ENCODE measurements at regions of chr11 and their contacts with region 1.

Region 1: GRCh38 chr11:73521621-73522020 is 76.3 kb downstream of the FAM168A start:
- DNase-seq: peak; percentile 53
- ATAC-seq: peak; percentile 84
- H3K4me3 ChIP-seq: no peak overlapping the region
- H3K27ac ChIP-seq: peak overlapping the region; percentile 64
- H3K4me1 ChIP-seq: peaks cover 17% of the 10 kb centered on the region
- H3K27me3 ChIP-seq: no peaks in the 10 kb centered on the region
- CTCF ChIP-seq: no peak
- EP300 ChIP-seq: 0 out of 4 replicates have a peak, but pooled peaks of 1 of the 2 experiments have one; percentile 20
- POLR2A ChIP-seq: no peak
- RAD21 ChIP-seq: no peak

Region 2: DNA sequence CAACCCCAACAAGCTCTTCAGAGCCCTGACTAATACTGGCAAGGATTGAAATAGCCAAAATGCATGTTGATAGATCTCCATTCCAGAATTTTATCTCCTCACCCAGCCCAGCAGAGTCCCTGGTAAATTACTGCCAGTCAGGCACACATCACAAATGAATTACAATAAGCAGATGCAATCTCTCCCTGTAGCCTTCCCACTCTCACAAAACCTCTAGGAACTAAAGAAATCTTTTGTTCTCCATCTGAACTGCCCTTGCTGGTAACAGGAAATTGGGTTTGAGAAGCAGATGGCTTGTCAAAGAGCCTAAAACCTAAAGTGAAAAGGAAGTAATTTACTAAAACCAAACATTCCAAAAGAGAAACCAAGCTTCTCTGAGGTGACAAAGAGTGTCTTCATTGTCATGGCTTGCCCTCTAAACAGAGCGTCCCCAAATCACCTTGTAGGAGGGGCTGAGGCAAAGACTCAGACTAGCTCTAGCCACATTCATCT is 16.8 kb after region 1 on chr11:
- CTCF ChIA-PET with region 1: interaction called, 4 read pairs
- POLR2A ChIA-PET with region 1: interaction called, 15 read pairs
- RAD21 ChIA-PET with region 1: interaction called, 21 read pairs
- SMC1A ChIA-PET with region 1: interaction called, 30 read pairs
- in situ Hi-C with region 1: no loop called
- intact Hi-C with region 1: no loop called
- DNase-seq: peak; percentile 53
- ATAC-seq: peak; percentile 98
- H3K4me3 ChIP-seq: 0 out of 2 replicates have a peak overlapping the region, but pooled peaks have one; percentile 0
- H3K27ac ChIP-seq: peak overlapping the region; percentile 76
- H3K4me1 ChIP-seq: peaks cover 13% of the 10 kb centered on the region
- H3K27me3 ChIP-seq: no peaks in the 10 kb centered on the region
- CTCF ChIP-seq: no peak
- EP300 ChIP-seq: no peak
- POLR2A ChIP-seq: no peak
- RAD21 ChIP-seq: no peak

Region 3: DNA sequence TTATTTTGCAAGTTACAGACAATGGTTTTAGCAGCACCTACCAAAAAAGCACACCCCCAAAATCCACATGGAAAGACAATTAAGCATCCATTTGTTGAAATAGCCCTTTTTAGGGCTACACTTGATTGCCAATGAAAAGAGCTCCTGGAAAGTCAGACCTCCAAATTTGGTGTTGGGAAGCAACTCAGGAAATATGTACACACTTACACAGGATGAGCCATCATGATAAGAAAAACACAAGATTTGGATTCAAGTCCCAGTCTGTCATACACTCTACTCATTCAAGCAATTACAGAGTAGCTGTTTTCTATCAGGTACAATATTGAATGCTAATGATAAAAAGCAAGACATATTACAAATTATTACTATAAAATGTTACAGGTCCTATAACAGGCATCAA is 44.8 kb after region 1 on chr11:
- CTCF ChIA-PET with region 1: no interaction called
- POLR2A ChIA-PET with region 1: interaction called, 12 read pairs
- RAD21 ChIA-PET with region 1: interaction called, 4 read pairs
- SMC1A ChIA-PET with region 1: interaction called, 6 read pairs
- in situ Hi-C with region 1: no loop called
- intact Hi-C with region 1: no loop called
- DNase-seq: no peak
- ATAC-seq: no peak
- H3K4me3 ChIP-seq: no peak overlapping the region
- H3K27ac ChIP-seq: no peak overlapping the region
- H3K4me1 ChIP-seq: peaks cover 5% of the 10 kb centered on the region; the same call in 1 of the 2 replicates
- H3K27me3 ChIP-seq: no peaks in the 10 kb centered on the region
- CTCF ChIP-seq: no peak
- EP300 ChIP-seq: no peak
- POLR2A ChIP-seq: no peak
- RAD21 ChIP-seq: no peak

Region 4: GRCh38 chr11:73590991-73591390 is 69.4 kb after region 1 on chr11:
- CTCF ChIA-PET with region 1: interaction called, 3 read pairs
- POLR2A ChIA-PET with region 1: interaction called, 5 read pairs
- RAD21 ChIA-PET with region 1: interaction called, 10 read pairs
- SMC1A ChIA-PET with region 1: interaction called, 4 read pairs
- in situ Hi-C with region 1: no loop called
- intact Hi-C with region 1: no loop called
- DNase-seq: no peak
- ATAC-seq: no peak
- H3K4me3 ChIP-seq: no peak overlapping the region
- H3K27ac ChIP-seq: no peak overlapping the region
- H3K4me1 ChIP-seq: no peaks in the 10 kb centered on the region
- H3K27me3 ChIP-seq: no peaks in the 10 kb centered on the region
- CTCF ChIP-seq: no peak
- EP300 ChIP-seq: no peak
- POLR2A ChIP-seq: no peak
- RAD21 ChIP-seq: no peak